Activated CD4-positive, alpha-beta T cell treated with anti-CD3 and anti-CD28 coated beads, Interleukin-2, amount 10 ng/mL, durations not matched to agents 24 days and 14 days (primary cell): ENCODE measurements at regions of chr3 and their contacts with region 1.

Region 1: GRCh38 chr3:197878427-197878826 is 71.6 kb upstream of the RPL35A start:
- DNase-seq: peak; percentile 83
- H3K4me3 Mint-ChIP-seq: peak overlapping the region; percentile 64
- H3K27ac Mint-ChIP-seq: peak overlapping the region; percentile 92
- H3K4me1 Mint-ChIP-seq: peaks cover 16% of the 10 kb centered on the region
- H3K27me3 Mint-ChIP-seq: no peaks in the 10 kb centered on the region

Region 2: GRCh38 chr3:197837282-197837681 is 41.1 kb before region 1 on chr3:
- intact Hi-C with region 1: no loop called
- DNase-seq: no peak
- H3K4me3 Mint-ChIP-seq: no peak overlapping the region
- H3K27ac Mint-ChIP-seq: no peak overlapping the region
- H3K4me1 Mint-ChIP-seq: peaks cover 2% of the 10 kb centered on the region
- H3K27me3 Mint-ChIP-seq: no peaks in the 10 kb centered on the region

Region 3: DNA sequence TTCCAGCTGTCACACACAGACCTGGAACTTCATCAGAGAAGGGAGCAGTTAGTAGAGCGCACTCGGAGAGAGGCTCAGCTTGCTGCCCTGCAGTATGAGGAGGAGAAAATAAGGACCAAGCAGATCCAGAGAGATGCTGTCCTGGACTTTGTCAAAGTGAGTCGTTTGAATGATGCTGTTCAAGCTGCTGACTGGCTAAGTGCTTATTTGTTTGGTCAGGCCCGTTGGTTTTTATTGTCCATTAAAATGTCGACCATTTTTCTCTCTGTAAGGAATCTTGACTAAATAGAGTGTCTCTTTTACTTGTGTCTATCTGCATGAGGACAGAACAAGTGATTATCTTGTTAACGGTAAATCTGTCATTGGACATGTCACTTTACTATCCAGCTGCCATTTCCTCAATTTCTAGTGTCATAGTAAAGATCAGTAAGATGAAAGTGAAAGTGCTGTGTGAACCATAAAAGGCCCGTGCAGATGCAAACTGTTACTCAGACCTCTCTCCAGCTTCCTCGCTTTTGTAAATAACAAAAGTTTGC is 30.5 kb before region 1 on chr3:
- intact Hi-C with region 1: loop called (anchors 1 kb)
- DNase-seq: peak; percentile 81
- H3K4me3 Mint-ChIP-seq: peak overlapping the region; percentile 75
- H3K27ac Mint-ChIP-seq: peak overlapping the region; percentile 89
- H3K4me1 Mint-ChIP-seq: peaks cover 15% of the 10 kb centered on the region
- H3K27me3 Mint-ChIP-seq: no peaks in the 10 kb centered on the region

Region 4: DNA sequence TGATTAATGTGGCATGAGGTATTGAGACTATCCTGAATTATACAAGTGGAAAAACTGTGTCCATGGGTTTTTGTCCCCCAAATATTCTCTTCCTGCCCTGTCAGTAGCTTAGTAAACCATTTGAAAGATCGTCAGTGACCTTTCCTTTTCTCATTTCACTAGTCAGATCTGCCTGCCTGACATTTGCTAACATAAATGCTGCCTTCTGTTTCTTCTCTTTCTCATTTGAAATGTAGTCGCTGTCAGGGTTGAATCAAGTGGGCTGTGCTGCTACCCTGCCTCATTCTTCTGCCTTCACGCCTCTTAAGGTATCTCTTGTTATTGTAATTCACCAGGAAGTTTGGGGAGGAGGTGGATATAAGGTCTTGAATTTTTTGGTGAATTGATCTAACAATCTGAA is 19.8 kb before region 1 on chr3:
- intact Hi-C with region 1: loop called (anchors 2 kb)
- DNase-seq: no peak
- H3K4me3 Mint-ChIP-seq: no peak overlapping the region
- H3K27ac Mint-ChIP-seq: no peak overlapping the region
- H3K4me1 Mint-ChIP-seq: peaks cover 5% of the 10 kb centered on the region
- H3K27me3 Mint-ChIP-seq: no peaks in the 10 kb centered on the region